ENCODE measurements at regions of chr2 and their contacts with region 1.

Region 1: GRCh38 chr2:36355151-36355889 is at the start of gene CRIM1:
- DNase-seq: peak; percentile 81 to 93 (median 88)
- ATAC-seq: peak; percentile 80
- H3K4me3 ChIP-seq: peak within 1 kb of the TSS; percentile 71 to 73
- H3K27ac ChIP-seq: peak within 1 kb of the TSS; percentile 79 to 81
- H3K4me1 ChIP-seq: peaks cover 5 to 64% of the 10 kb centered on the region in 2 donors
- H3K27me3 ChIP-seq: peaks cover 0 to 53% of the 10 kb centered on the region in 2 donors
- CTCF ChIP-seq: no peak
- polyA plus RNA-seq, gene CRIM1: 28.7 to 32.4 (median 31.0) TPM

Region 2: GRCh38 chr2:36486546-36487044 is 131.3 kb after region 1 on chr2:
- intact Hi-C with region 1: loop called in 1 of 2 experiments (anchors 10 kb)
- DNase-seq: no peak
- ATAC-seq: peak; percentile 36
- H3K4me3 ChIP-seq: no peak overlapping the region
- H3K27ac ChIP-seq: peak overlapping the region in 1 of 2 donors; percentile 9
- H3K4me1 ChIP-seq: peaks cover 23% of the 10 kb centered on the region in 2 donors
- H3K27me3 ChIP-seq: no peaks in the 10 kb centered on the region
- CTCF ChIP-seq: no peak

Region 3: DNA sequence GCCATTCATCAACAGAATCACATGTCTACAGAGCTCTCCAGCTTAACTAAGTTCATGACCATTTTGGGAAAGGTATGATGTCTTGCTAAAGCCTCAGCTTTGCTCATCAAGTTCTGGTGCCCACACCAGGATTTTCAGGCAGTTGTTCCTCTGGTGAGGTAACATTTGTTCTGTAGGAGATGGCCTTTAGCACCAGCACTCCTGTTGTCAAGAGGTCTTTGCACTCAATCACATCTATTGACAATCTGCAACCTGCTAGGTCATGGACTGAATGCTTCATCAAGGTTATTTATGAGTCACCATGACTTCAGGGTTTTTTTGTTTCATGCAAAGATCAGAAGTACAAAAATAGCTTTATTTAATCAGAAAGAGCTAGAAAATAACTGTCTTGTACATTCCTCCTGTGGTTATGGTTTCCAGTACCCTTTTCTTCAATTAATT is 304.6 kb after region 1 on chr2:
- intact Hi-C with region 1: loop called in 1 of 2 experiments (anchors 5 kb)
- DNase-seq: no peak
- ATAC-seq: no peak
- H3K4me3 ChIP-seq: no peak overlapping the region
- H3K27ac ChIP-seq: no peak overlapping the region
- H3K4me1 ChIP-seq: no peaks in the 10 kb centered on the region
- H3K27me3 ChIP-seq: no peaks in the 10 kb centered on the region
- CTCF ChIP-seq: no peak